GM10248 (cell line): ENCODE measurements at regions of chr1 and their contacts with region 1.

Region 1: GRCh38 chr1:157369808-157370521 is 182.3 kb downstream of the FCRL5 start:
- DNase-seq: peak; percentile 50
- CTCF ChIP-seq: peak; percentile 87

Region 2: GRCh38 chr1:157348538-157349480 is 21.2 kb before region 1 on chr1:
- CTCF ChIA-PET with region 1: interaction called, 11 read pairs
- POLR2A ChIA-PET with region 1: no interaction called
- DNase-seq: no peak
- CTCF ChIP-seq: no peak

Region 3: DNA sequence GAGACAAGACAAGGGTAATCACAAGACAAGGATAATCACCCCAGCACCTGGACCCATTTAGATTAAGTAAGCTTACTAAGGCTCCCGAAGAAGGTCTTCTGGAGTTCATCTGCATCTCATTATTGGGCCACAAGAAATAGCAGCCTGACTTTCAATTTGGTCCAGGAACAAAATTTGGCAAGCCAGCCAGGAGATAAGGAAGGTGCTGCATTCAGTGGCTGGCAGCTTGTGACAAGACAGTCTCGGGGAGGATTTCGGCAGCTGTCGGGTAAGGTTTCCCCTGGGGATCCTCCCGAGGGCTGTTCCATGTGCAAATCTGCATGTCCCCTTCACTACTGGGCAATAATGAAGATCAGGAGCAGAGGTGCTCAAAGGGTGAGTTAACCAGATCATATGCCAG is 12.9 kb before region 1 on chr1:
- CTCF ChIA-PET with region 1: interaction called, 14 read pairs
- POLR2A ChIA-PET with region 1: no interaction called
- DNase-seq: no peak
- CTCF ChIP-seq: no peak

Region 4: GRCh38 chr1:157380523-157380922 is 10.6 kb after region 1 on chr1:
- CTCF ChIA-PET with region 1: interaction called, 22 read pairs
- POLR2A ChIA-PET with region 1: no interaction called
- DNase-seq: no peak
- CTCF ChIP-seq: no peak

Region 5: GRCh38 chr1:157490467-157491165 is 120.7 kb after region 1 on chr1:
- CTCF ChIA-PET with region 1: interaction called, 26 read pairs
- POLR2A ChIA-PET with region 1: no interaction called
- DNase-seq: peak; percentile 54
- CTCF ChIP-seq: peak; percentile 72

Region 6: DNA sequence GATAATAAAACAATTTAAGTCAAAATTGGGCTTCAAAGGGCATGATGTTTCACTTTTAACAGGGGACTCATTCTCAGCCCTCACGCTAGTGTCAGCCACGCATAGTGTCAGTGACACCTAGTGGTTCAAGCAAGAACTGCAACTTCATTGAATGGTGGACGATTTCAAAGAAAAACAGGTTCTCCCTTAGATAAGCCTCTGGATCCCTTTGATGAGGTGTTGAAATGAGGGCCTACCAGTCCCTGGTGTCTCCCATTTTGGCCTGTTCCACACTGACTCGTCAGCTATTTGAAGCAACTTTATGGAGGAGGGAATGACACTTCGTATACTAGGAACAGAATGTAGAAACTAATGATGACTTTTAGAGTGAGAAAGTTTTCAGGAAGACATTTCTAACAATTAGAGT is 126.2 kb after region 1 on chr1:
- CTCF ChIA-PET with region 1: interaction called, 26 read pairs
- POLR2A ChIA-PET with region 1: no interaction called
- DNase-seq: peak; percentile 39
- CTCF ChIP-seq: peak; percentile 81

Region 7: GRCh38 chr1:157505481-157506272 is 135.7 kb after region 1 on chr1:
- CTCF ChIA-PET with region 1: interaction called, 17 read pairs
- POLR2A ChIA-PET with region 1: no interaction called
- DNase-seq: peak; percentile 75
- CTCF ChIP-seq: peak; percentile 84